Dorsolateral prefrontal cortex (tissue), 120 donors: ENCODE measurements at regions of chr9 and their contacts with region 1.

Region 1: GRCh38 chr9:111525056-111525977 is at the start of gene ZNF483:
- DNase-seq: peak; percentile 81 to 92 (median 90)
- H3K4me3 ChIP-seq: peak within 1 kb of the TSS; percentile 64 to 99 (median 93)
- H3K27ac ChIP-seq: peak within 1 kb of the TSS; percentile 58 to 99 (median 94)
- H3K27me3 ChIP-seq: no peaks in the 10 kb centered on the region
- CTCF ChIP-seq: peak in 15 of 56 donors; percentile 6 to 43 (median 16)
- total RNA-seq, gene ZNF483: 111 to 352 (median 252) TPM

Region 2: GRCh38 chr9:111412280-111412679 is 113.0 kb before region 1 on chr9:
- intact Hi-C with region 1: loop called (anchors 2 to 5 kb)
- DNase-seq: peak in 8 of 10 donors; percentile 10 to 90 (median 68)
- H3K4me3 ChIP-seq: peak overlapping the region in 54 of 59 donors; percentile 4 to 66 (median 40)
- H3K27ac ChIP-seq: peak overlapping the region in 58 of 59 donors; percentile 42 to 97 (median 88)
- H3K27me3 ChIP-seq: no peaks in the 10 kb centered on the region
- CTCF ChIP-seq: peak in 55 of 56 donors; percentile 9 to 71 (median 40)

Region 3: GRCh38 chr9:111483862-111484571 is 41.3 kb before region 1 on chr9 and contains the start of gene ECPAS:
- intact Hi-C with region 1: loop called (anchors 1 kb)
- DNase-seq: peak; percentile 28 to 80 (median 52)
- H3K4me3 ChIP-seq: peak within 1 kb of the TSS; percentile 57 to 97 (median 90)
- H3K27ac ChIP-seq: peak within 1 kb of the TSS; percentile 77 to 99 (median 96)
- H3K27me3 ChIP-seq: no peaks in the 10 kb centered on the region
- CTCF ChIP-seq: peak in 5 of 56 donors; percentile 6 to 26 (median 10)
- total RNA-seq, gene ECPAS: 79.2 to 151 (median 115) TPM

Region 4: DNA sequence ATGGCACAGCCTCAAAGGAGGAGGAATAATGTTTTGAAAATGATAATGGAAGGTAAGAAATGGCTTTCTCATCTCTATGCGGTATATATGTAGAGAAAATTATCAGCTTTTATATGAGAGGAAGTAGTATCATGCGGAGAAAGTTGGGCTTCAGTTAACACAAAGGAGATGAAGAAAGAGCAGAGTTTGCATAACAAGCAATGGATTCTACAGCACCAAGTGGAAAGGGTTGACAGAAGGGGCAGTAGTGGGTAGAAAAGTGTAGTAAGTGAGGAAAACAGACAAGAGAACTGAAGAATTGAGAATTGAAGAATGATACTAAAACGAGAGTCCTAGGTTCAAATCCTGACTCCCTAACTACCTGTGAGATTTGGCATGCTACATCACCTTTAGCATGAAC is 187.1 kb after region 1 on chr9:
- intact Hi-C with region 1: no loop called
- DNase-seq: no peak
- H3K4me3 ChIP-seq: no peak overlapping the region
- H3K27ac ChIP-seq: no peak overlapping the region
- H3K27me3 ChIP-seq: no peaks in the 10 kb centered on the region
- CTCF ChIP-seq: no peak

Region 5: DNA sequence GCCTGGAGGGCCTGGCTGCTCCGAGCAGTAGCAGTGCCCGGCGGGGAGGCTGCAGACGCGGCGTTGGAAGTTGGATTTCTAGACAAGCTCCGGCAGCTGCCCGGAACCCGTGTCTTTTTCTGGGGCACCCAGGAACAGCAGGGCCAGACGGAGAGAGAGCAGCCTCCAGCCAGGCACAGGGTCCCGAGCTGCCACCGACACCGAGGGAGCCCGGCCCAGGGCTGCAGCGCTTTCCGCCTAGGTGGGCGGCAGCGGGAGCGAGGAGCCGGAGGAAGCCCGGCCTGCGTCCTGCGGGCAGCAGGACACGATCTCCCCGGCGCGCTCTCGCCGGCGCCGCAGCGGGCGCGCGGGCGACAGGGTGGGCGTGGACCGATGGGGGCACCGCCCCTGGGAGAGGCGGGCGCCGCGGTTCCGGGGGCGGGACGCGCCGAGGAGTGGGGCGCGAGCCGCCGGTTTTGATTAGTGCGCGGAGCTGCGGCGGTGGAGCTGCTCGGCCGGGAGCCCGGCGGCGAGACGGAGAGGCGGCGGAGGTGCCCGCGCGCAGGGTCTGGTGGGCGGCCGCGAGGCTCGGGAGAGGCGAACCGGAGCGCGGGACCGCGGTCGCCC is 371.1 kb after region 1 on chr9 and contains the start of gene UGCG:
- intact Hi-C with region 1: loop called in 1 of 2 experiments (anchors 10 kb)
- DNase-seq: peak; percentile 62 to 94 (median 86)
- H3K4me3 ChIP-seq: peak within 1 kb of the TSS; percentile 68 to 98 (median 89)
- H3K27ac ChIP-seq: peak within 1 kb of the TSS in 58 of 59 donors; percentile 67 to 96 (median 90)
- H3K27me3 ChIP-seq: no peaks in the 10 kb centered on the region
- CTCF ChIP-seq: peak in 10 of 56 donors; percentile 4 to 55 (median 12)
- total RNA-seq, gene UGCG: 12.6 to 46.0 (median 30.8) TPM